Lower lobe of right lung (tissue), 2 donors: ENCODE measurements at regions of chr21 and their contacts with region 1.

Region 1: DNA sequence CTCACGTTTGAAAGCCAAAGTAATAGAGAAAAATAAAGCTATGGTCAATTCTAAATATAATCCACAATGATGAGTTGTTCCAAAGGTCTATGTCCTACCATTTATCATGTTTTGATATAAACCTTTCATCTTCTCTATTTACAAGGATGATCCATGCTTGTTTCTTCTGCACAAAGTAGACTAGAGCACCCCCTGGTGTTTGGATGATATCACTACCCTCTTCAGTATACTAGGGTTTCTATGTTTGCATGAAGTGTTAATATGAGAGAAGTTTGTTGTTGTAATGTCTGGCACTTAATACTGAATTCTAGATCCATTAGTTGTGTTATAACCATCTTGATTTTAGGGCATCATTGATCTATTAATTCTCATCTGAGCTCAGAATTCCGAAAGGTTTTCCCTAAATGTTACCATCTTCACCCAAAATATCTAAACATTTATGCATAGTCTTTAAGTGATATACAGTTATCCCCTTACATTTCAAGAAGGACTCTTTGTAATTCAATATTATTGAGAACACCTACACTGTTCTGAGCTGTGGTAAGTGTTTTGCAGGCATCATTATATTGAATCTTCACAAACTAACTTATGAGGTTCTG is 21.1 kb downstream of the CLDN8 start:
- DNase-seq: no peak
- ATAC-seq: peak; percentile 64 to 73
- H3K4me3 ChIP-seq: no peak overlapping the region
- H3K27ac ChIP-seq: no peak overlapping the region
- H3K4me1 ChIP-seq: no peaks in the 10 kb centered on the region
- H3K27me3 ChIP-seq: no peaks in the 10 kb centered on the region
- CTCF ChIP-seq: peak; percentile 55

Region 2: GRCh38 chr21:29870814-29871213 is 324.0 kb before region 1 on chr21:
- intact Hi-C with region 1: no loop called
- DNase-seq: no peak
- ATAC-seq: no peak
- H3K4me3 ChIP-seq: no peak overlapping the region
- H3K27ac ChIP-seq: no peak overlapping the region
- H3K4me1 ChIP-seq: no peaks in the 10 kb centered on the region
- H3K27me3 ChIP-seq: no peaks in the 10 kb centered on the region
- CTCF ChIP-seq: no peak

Region 3: DNA sequence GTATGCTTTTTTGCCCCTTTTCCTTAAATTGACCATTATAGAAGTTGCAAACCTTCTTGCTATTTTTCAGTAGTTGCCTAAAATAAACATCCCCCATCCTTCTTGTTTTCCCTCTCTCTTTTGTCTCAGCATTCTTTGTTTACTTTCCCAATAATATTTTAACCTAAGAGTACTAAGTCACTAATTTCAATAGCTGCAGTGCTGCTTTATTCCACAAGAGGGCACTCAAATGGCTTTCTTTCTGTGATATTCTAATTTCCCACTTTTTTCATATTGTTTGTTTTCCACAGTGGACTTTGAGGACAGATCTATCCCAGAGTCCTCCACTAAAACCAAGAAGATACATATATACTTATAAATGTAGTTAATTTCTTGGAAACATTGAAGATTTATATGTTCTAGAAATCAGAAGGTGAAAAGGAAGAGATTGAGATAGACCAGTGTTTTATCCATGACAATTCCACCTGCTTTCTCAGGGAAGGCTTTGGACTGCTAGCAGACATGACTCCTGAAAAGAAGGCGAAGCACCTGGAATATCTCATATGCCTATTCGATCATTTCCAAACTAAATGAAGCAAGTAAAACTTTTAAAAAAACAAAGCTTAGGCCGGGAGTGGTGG is 150.2 kb before region 1 on chr21:
- intact Hi-C with region 1: loop called (anchors 10 kb)
- DNase-seq: no peak
- ATAC-seq: no peak
- H3K4me3 ChIP-seq: no peak overlapping the region
- H3K27ac ChIP-seq: no peak overlapping the region
- H3K4me1 ChIP-seq: no peaks in the 10 kb centered on the region
- H3K27me3 ChIP-seq: no peaks in the 10 kb centered on the region
- CTCF ChIP-seq: peak; percentile 78